Posterior vena cava (tissue), 2 donors: ENCODE measurements at regions of chr16 and their contacts with region 1.

Region 1: GRCh38 chr16:55976815-55977214 is 101.6 kb upstream of the CES5A start:
- DNase-seq: no peak

Region 2: DNA sequence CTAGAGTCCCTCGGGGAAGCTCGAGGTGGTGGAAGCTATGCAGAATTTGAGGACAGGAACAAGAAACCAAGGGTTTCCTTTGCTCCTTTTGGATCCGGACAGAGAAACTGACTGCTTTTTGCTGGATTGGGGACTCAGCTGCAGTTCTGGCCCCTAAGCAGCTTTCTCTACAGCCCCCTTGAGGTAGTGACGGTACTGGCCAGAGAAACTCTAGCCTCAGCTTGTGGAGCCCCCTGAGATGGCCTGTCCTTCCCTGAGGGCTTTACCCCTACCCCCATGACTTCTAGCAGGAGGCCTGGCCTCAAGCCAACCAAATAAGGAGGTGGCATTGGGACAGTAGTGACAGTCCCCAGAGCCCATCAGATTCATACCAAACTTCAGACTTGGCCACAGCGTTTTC is 928.1 kb before region 1 on chr16:
- intact Hi-C with region 1: loop called in 1 of 2 experiments (anchors 5 kb)
- DNase-seq: no peak